HepG2 (cell line): ENCODE measurements at regions of chr13 and their contacts with region 1.

Region 1: DNA sequence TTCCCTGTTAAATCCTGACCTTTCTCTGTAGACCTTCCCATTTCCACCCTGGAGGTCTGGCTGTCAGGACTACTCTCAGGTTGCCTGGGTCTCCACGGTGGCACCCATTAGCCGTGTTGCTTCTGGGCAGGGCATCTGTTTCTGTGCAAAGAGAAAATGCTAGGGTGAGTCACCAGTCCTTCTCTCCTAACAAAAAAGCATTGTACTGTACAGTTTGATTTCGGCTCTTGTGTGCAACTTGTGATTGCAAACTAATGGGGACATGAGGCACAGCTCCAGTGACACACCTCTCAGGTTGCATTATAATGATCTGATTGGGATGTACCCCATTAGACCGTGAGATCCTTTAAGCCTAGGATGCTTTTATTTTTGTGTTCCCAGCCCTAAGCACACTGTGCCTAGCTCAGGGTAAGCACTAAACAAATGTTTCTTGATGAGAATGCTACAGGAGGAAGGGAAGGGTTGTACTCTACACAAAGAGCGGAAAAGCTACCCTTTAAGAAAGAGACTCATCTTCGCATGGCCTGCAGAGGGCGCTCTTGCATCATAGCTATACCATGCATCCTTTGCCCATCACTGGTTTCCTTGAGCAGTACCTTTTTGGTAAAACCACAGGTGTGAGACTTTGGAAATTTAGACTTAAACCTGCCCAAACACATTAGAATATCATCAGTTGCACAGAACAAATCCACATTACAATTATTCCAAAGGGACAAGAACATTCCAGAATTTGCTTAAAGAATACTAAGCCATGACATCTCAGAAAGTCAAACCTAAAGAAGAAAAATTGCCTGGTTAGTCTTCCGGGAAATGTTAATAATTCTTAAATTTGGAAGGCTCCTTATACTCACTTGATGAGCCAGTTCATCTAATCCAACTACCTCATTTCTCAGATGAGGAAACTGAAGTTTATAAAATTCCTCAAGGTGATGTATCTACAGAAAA is 20.3 kb upstream of the TRIM13 start:
- DNase-seq: peak; percentile 65
- ATAC-seq: peak; percentile 87
- H3K4me3 ChIP-seq: peak overlapping the region in 1 of 3 experiments; percentile 4; a peak in 1 of 6 replicates
- H3K27ac ChIP-seq: no peak overlapping the region
- H3K4me1 ChIP-seq: peaks cover 24% of the 10 kb centered on the region
- H3K27me3 ChIP-seq: no peaks in the 10 kb centered on the region
- CTCF ChIP-seq: peak; percentile 94
- EP300 ChIP-seq: no peak
- POLR2A ChIP-seq: no peak
- RAD21 ChIP-seq: peak; percentile 81

Region 2: GRCh38 chr13:49869519-49869918 is 107.1 kb before region 1 on chr13:
- CTCF ChIA-PET with region 1: no interaction called
- POLR2A ChIA-PET with region 1: no interaction called
- in situ Hi-C with region 1: no loop called
- intact Hi-C with region 1: loop called (anchors 2 kb)
- DNase-seq: peak; percentile 53
- ATAC-seq: peak; percentile 94
- H3K4me3 ChIP-seq: no peak overlapping the region
- H3K27ac ChIP-seq: no peak overlapping the region
- H3K4me1 ChIP-seq: no peaks in the 10 kb centered on the region; the same call in 1 of the 2 replicates
- H3K27me3 ChIP-seq: no peaks in the 10 kb centered on the region
- CTCF ChIP-seq: peak; percentile 57
- EP300 ChIP-seq: no peak
- POLR2A ChIP-seq: no peak
- RAD21 ChIP-seq: peak; percentile 43; the same call in 1 of the 2 replicates

Region 3: GRCh38 chr13:50170447-50171037 is 194.0 kb after region 1 on chr13:
- CTCF ChIA-PET with region 1: no interaction called
- POLR2A ChIA-PET with region 1: no interaction called
- in situ Hi-C with region 1: no loop called
- intact Hi-C with region 1: no loop called
- DNase-seq: no peak
- ATAC-seq: no peak
- H3K4me3 ChIP-seq: no peak overlapping the region
- H3K27ac ChIP-seq: no peak overlapping the region
- H3K4me1 ChIP-seq: peaks cover 14% of the 10 kb centered on the region
- H3K27me3 ChIP-seq: no peaks in the 10 kb centered on the region
- CTCF ChIP-seq: peak; percentile 43
- EP300 ChIP-seq: no peak
- POLR2A ChIP-seq: no peak
- RAD21 ChIP-seq: no peak

Region 4: GRCh38 chr13:50529154-50529882 is 552.7 kb after region 1 on chr13:
- CTCF ChIA-PET with region 1: no interaction called
- POLR2A ChIA-PET with region 1: no interaction called
- in situ Hi-C with region 1: loop called (anchors 25 kb)
- intact Hi-C with region 1: loop called (anchors 1 kb)
- DNase-seq: no peak
- ATAC-seq: no peak; the same call in 2 of the 3 replicates
- H3K4me3 ChIP-seq: no peak overlapping the region
- H3K27ac ChIP-seq: peak overlapping the region; percentile 34
- H3K4me1 ChIP-seq: peaks cover 10% of the 10 kb centered on the region
- H3K27me3 ChIP-seq: no peaks in the 10 kb centered on the region
- CTCF ChIP-seq: no peak
- EP300 ChIP-seq: no peak
- POLR2A ChIP-seq: no peak
- RAD21 ChIP-seq: no peak

Region 5: GRCh38 chr13:51070005-51070649 is 1093.5 kb after region 1 on chr13:
- CTCF ChIA-PET with region 1: no interaction called
- POLR2A ChIA-PET with region 1: no interaction called
- in situ Hi-C with region 1: loop called (anchors 25 kb)
- intact Hi-C with region 1: loop called (anchors 1 kb)
- DNase-seq: peak; percentile 44
- ATAC-seq: peak; percentile 95
- H3K4me3 ChIP-seq: no peak overlapping the region
- H3K27ac ChIP-seq: no peak overlapping the region
- H3K4me1 ChIP-seq: peaks cover 10% of the 10 kb centered on the region
- H3K27me3 ChIP-seq: peaks cover 0 to 21% of the 10 kb centered on the region in 2 experiments; a peak in 4 of 5 replicates
- CTCF ChIP-seq: peak; percentile 95
- EP300 ChIP-seq: no peak
- POLR2A ChIP-seq: no peak
- RAD21 ChIP-seq: peak; percentile 91